ENCODE measurements at regions of chr9 and their contacts with region 1.

Region 1: DNA sequence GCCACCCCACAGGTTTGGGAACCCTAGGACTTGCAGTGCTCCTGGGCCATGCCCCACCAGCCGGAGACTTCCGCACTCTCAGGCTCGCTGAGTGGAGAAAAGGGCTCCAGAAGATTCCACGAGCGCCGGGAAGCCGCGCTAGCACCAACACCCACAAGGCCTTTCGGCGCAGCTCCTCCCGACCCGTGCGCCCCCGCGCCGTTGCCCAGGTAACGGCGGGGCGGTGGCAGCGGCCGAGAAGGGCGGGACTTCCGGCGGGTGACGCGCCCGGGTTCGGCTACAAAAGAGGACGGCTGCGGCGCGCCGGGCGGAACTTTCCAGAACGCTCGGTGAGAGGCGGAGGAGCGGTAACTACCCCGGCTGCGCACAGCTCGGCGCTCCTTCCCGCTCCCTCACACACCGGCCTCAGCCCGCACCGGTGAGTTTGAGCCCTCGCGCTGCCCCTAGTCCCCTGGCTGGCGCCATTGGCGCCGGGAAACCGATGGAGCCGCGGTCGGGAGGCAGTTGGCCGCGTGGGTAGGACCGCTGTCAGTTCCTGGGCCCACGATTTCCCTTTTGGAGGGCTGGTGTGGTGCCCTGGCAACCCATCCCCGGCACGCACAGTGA is at the start of gene DNAJA1:
- DNase-seq: peak; percentile 95
- H3K4me3 Mint-ChIP-seq: peak within 1 kb of the TSS; percentile 94
- H3K27ac Mint-ChIP-seq: peak within 1 kb of the TSS; percentile 98
- H3K4me1 Mint-ChIP-seq: peaks cover 68% of the 10 kb centered on the region
- H3K27me3 Mint-ChIP-seq: no peaks in the 10 kb centered on the region
- total RNA-seq, gene DNAJA1: 296 and 312 TPM in 2 replicates

Region 2: GRCh38 chr9:33044127-33044673 is 19.1 kb after region 1 on chr9:
- intact Hi-C with region 1: loop called (anchors 1 kb)
- DNase-seq: peak; percentile 61
- H3K4me3 Mint-ChIP-seq: peak overlapping the region; percentile 80
- H3K27ac Mint-ChIP-seq: peak overlapping the region; percentile 58
- H3K4me1 Mint-ChIP-seq: peaks cover 21% of the 10 kb centered on the region
- H3K27me3 Mint-ChIP-seq: no peaks in the 10 kb centered on the region

Region 3: DNA sequence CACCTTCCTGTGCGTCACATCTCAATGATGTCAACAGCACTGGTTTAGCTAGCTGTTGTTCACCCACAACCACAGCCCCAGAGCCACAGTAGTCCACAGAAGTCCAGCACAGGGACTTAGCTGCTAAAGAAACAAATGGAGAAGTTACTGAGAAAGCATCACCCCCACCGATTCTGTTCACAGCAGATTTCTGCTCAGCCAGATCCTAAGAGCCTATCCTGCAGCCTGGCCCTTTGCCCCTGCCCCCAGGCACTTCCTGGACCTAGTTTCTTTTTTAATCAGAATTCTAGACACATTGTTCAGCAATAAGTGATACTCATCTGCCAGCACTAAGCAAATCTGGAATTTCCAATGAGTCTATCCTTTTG is 134.7 kb after region 1 on chr9:
- intact Hi-C with region 1: loop called (anchors 2 kb)
- DNase-seq: peak; percentile 63
- H3K4me3 Mint-ChIP-seq: peak overlapping the region; percentile 82
- H3K27ac Mint-ChIP-seq: peak overlapping the region; percentile 96
- H3K4me1 Mint-ChIP-seq: peaks cover 86% of the 10 kb centered on the region
- H3K27me3 Mint-ChIP-seq: no peaks in the 10 kb centered on the region

Region 4: DNA sequence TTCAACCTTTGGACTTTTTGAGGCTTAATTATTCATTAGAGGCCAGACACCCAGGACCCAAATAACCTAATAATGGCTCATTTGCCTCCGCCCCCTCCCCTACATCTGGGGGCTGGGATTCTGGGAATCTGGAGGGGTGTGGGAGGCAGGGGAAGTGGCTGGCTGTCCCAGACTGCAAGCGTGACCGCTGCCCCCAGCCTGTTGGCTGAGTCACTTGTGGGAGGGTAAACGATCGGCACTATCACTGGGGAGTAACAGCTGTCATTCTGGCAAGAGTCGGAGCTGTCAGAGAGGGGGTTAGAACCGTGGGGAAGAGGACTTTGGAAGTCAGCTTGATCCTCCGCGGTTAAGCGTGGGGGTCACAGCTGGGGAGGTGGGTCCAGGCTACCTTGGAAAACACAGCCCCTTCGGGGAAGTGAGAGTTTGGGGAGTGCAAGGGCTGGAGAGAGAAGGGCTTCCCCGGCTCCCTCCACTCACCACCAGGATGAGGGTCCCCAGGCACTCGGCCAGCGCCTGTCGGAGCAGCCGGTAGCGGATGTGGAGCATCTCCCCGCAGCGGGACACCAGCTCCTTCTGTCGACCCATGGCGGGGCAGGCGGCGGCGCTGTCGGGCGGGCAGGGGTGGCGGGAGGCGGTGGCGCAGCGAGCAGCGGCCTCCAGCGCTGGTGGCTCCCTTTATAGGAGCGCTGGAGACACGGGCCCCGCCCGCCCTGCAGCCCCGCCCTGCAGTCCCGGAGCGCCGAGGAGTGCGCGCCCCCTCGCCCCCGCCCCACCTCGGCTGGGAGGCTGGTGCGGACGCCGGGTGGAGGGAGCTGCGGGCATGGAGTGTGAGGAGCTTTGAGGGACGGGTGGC is 422.1 kb after region 1 on chr9 and contains the start of gene AQP3:
- intact Hi-C with region 1: no loop called
- DNase-seq: peak; percentile 72
- H3K4me3 Mint-ChIP-seq: peak within 1 kb of the TSS; percentile 93
- H3K27ac Mint-ChIP-seq: peak within 1 kb of the TSS; percentile 90
- H3K4me1 Mint-ChIP-seq: peaks cover 40% of the 10 kb centered on the region
- H3K27me3 Mint-ChIP-seq: no peaks in the 10 kb centered on the region
- total RNA-seq, gene AQP3: 3.4 and 6.1 TPM in 2 replicates

Measured in activated T-helper 1 cell treated with anti-CD3 and anti-CD28 coated beads, Interleukin-12 subunit alpha, Interleukin-12 subunit beta, Interleukin-2, Interleukin-4 antibody, amounts not matched to agents 30 ng/mL and 10 ng/mL and 1 ng/mL, durations not matched to agents 14 hours and 24 hours and 36 hours (primary cell).